Naive thymus-derived CD8-positive, alpha-beta T cell (primary cell): ENCODE measurements at regions of chr4 and their contacts with region 1.

Region 1: GRCh38 chr4:80058740-80059139 is 14.3 kb downstream of the ANTXR2 start:
- DNase-seq: peak in 9 of 10 donors; percentile 22 to 90 (median 64)
- ATAC-seq: peak; percentile 92 to 94
- H3K4me3 Mint-ChIP-seq: peak overlapping the region; percentile 67 to 87 (median 78)
- H3K27ac Mint-ChIP-seq: peak overlapping the region; percentile 86 to 99 (median 98)
- H3K4me1 Mint-ChIP-seq: peaks cover 3 to 43% (median 19%) of the 10 kb centered on the region in 4 donors
- H3K27me3 Mint-ChIP-seq: no peaks in the 10 kb centered on the region

Region 2: GRCh38 chr4:79540143-79540542 is 518.6 kb before region 1 on chr4:
- POLR2A ChIA-PET with region 1: no interaction called
- DNase-seq: no peak
- ATAC-seq: no peak
- H3K4me3 Mint-ChIP-seq: no peak overlapping the region
- H3K27ac Mint-ChIP-seq: peak overlapping the region in 1 of 10 donors; percentile 19
- H3K4me1 Mint-ChIP-seq: no peaks in the 10 kb centered on the region
- H3K27me3 Mint-ChIP-seq: peaks cover 0 to 4% (median 0%) of the 10 kb centered on the region in 5 donors

Region 3: DNA sequence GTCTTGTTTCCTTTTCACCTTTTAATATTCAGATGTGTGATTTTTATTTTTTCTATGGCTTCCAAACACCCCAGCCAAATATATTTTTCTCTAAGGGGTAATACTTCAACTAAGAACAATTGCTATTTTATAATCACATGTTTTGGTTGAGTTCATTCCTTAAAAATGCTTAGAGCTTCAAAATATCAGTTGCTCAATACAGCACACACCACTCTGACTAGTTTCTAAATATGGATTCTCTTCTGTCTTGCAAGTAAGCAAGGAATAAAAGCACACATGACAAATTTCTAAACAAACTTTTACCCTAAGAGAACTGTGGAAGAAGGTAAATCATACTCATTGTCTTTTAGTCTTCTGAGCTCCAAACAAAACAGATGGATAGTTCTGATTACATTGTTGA is 13.0 kb before region 1 on chr4:
- POLR2A ChIA-PET with region 1: no interaction called
- DNase-seq: no peak
- ATAC-seq: no peak
- H3K4me3 Mint-ChIP-seq: no peak overlapping the region
- H3K27ac Mint-ChIP-seq: no peak overlapping the region
- H3K4me1 Mint-ChIP-seq: peaks cover 0 to 3% (median 0%) of the 10 kb centered on the region in 4 donors
- H3K27me3 Mint-ChIP-seq: no peaks in the 10 kb centered on the region

Region 4: DNA sequence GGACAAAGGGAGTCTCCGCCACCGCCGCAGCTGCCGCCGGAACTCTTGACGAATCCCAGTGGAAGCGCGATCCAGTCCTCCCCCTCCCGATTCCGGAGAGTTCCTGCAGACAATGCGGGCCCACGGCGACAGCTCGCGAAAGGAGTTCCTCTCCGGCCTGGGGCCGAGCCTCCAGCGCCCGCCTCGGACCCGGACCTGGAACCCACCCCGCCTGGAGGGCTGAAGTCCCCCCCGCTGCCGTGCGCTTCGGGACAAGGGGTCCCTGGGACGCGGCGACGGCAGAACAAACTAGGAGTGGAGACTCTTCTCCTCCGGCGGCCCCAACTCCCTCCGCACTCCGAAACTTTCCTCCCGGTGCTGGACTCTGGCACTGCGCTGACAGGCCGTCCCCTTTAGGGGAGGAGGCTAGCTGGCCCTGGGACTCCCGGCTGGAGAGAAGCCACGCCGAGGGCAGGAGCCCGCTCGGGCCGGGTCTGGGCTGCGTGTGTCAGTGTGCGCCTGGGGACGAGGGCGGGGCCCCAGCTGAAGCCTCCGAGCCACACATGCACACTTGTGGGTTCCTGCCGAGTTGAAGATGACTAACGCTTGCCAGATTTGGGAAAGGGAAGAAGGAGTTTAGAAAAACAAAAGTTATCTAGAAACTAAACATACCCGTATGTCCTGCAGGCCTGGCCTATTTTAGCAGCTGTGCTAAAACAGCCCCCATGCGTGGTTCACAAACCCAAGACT is 14.2 kb after region 1 on chr4 and contains the start of gene ANTXR2:
- POLR2A ChIA-PET with region 1: interaction called, 10 read pairs
- DNase-seq: peak; percentile 41 to 71 (median 48)
- ATAC-seq: peak; percentile 73 to 77
- H3K4me3 Mint-ChIP-seq: peak within 1 kb of the TSS; percentile 88 to 99 (median 97)
- H3K27ac Mint-ChIP-seq: peak within 1 kb of the TSS; percentile 87 to 99 (median 97)
- H3K4me1 Mint-ChIP-seq: peaks cover 18 to 74% (median 45%) of the 10 kb centered on the region in 4 donors
- H3K27me3 Mint-ChIP-seq: no peaks in the 10 kb centered on the region
- polyA plus RNA-seq, gene ANTXR2: 11.4 to 22.1 (median 11.5) TPM